ENCODE measurements at regions of chr11 and their contacts with region 1.

Region 1: GRCh38 chr11:86456052-86456939 is 81.6 kb downstream of the CCDC81 start:
- DNase-seq: peak; percentile 80
- ATAC-seq: peak; percentile 78
- H3K4me3 ChIP-seq: no peak overlapping the region
- H3K27ac ChIP-seq: no peak overlapping the region
- H3K4me1 ChIP-seq: peaks cover 22% of the 10 kb centered on the region
- H3K27me3 ChIP-seq: no peaks in the 10 kb centered on the region
- CTCF ChIP-seq: peak; percentile 96
- POLR2A ChIP-seq: peak; percentile 51; the same call in 1 of the 2 replicates
- RAD21 ChIP-seq: peak; percentile 99

Region 2: GRCh38 chr11:86515297-86516094 is 59.2 kb after region 1 on chr11:
- CTCF ChIA-PET with region 1: no interaction called
- POLR2A ChIA-PET with region 1: no interaction called
- dilution Hi-C with region 1: no loop called
- in situ Hi-C with region 1: no loop called
- intact Hi-C with region 1: loop called (anchors 5 kb)
- DNase-seq: peak; percentile 91
- ATAC-seq: peak; percentile 77
- H3K4me3 ChIP-seq: no peak overlapping the region
- H3K27ac ChIP-seq: no peak overlapping the region; the same call in 1 of the 2 replicates
- H3K4me1 ChIP-seq: peaks cover 24% of the 10 kb centered on the region
- H3K27me3 ChIP-seq: no peaks in the 10 kb centered on the region
- CTCF ChIP-seq: no peak
- POLR2A ChIP-seq: no peak
- RAD21 ChIP-seq: peak; percentile 5; the same call in 1 of the 2 replicates

Region 3: GRCh38 chr11:86671682-86672621 is 215.7 kb after region 1 on chr11 and contains the start of gene ME3:
- CTCF ChIA-PET with region 1: no interaction called
- POLR2A ChIA-PET with region 1: no interaction called
- dilution Hi-C with region 1: no loop called
- in situ Hi-C with region 1: no loop called
- intact Hi-C with region 1: loop called (anchors 2 kb)
- DNase-seq: peak; percentile 44
- ATAC-seq: peak; percentile 83
- H3K4me3 ChIP-seq: peak within 1 kb of the TSS; percentile 64
- H3K27ac ChIP-seq: peak within 1 kb of the TSS; percentile 18; the same call in 1 of the 2 replicates
- H3K4me1 ChIP-seq: 0 out of 2 replicates have a peak, but pooled peaks cover 2% of the 10 kb centered on the region
- H3K27me3 ChIP-seq: no peaks in the 10 kb centered on the region
- CTCF ChIP-seq: no peak
- POLR2A ChIP-seq: no peak
- RAD21 ChIP-seq: 0 out of 2 replicates have a peak, but pooled peaks have one; percentile 3
- total RNA-seq, gene ME3: 9.0 and 9.2 TPM in 2 replicates

Region 4: DNA sequence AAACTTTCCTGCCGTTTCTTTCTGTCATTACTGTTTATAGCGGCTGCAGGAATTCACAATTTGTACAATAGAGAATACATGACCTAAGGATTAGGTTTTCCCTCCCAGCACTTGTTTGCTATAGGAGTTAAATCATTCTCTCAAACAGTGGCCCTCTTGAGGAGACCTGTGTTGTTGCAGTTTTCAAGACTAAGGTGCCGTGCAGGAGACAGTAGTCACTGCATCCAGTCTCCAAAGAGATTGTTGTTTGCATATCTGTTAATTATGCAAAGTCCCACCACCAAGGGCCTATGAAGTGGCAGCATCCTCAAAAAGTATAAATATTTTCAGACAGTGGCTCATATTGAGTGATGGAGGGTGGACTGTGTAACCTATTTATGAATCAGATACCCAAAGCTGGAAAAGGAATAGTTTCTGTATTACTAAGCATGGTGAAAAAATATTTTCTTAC is 346.3 kb after region 1 on chr11:
- CTCF ChIA-PET with region 1: interaction called, 3 read pairs
- POLR2A ChIA-PET with region 1: no interaction called
- dilution Hi-C with region 1: no loop called
- in situ Hi-C with region 1: no loop called
- intact Hi-C with region 1: loop called (anchors 1 kb)
- DNase-seq: peak; percentile 57
- ATAC-seq: peak; percentile 15; the same call in 1 of the 2 replicates
- H3K4me3 ChIP-seq: peak overlapping the region; percentile 82; the same call in 1 of the 2 replicates
- H3K27ac ChIP-seq: no peak overlapping the region
- H3K4me1 ChIP-seq: peaks cover 22% of the 10 kb centered on the region
- H3K27me3 ChIP-seq: no peaks in the 10 kb centered on the region
- CTCF ChIP-seq: peak; percentile 45
- POLR2A ChIP-seq: no peak
- RAD21 ChIP-seq: peak; percentile 42

Region 5: GRCh38 chr11:86896441-86896841 is 440.1 kb after region 1 on chr11:
- CTCF ChIA-PET with region 1: no interaction called
- POLR2A ChIA-PET with region 1: no interaction called
- dilution Hi-C with region 1: no loop called
- in situ Hi-C with region 1: no loop called
- intact Hi-C with region 1: no loop called
- DNase-seq: peak; percentile 81
- ATAC-seq: peak; percentile 48
- H3K4me3 ChIP-seq: no peak overlapping the region
- H3K27ac ChIP-seq: no peak overlapping the region
- H3K4me1 ChIP-seq: no peaks in the 10 kb centered on the region
- H3K27me3 ChIP-seq: no peaks in the 10 kb centered on the region
- CTCF ChIP-seq: no peak
- POLR2A ChIP-seq: no peak
- RAD21 ChIP-seq: no peak

Region 6: DNA sequence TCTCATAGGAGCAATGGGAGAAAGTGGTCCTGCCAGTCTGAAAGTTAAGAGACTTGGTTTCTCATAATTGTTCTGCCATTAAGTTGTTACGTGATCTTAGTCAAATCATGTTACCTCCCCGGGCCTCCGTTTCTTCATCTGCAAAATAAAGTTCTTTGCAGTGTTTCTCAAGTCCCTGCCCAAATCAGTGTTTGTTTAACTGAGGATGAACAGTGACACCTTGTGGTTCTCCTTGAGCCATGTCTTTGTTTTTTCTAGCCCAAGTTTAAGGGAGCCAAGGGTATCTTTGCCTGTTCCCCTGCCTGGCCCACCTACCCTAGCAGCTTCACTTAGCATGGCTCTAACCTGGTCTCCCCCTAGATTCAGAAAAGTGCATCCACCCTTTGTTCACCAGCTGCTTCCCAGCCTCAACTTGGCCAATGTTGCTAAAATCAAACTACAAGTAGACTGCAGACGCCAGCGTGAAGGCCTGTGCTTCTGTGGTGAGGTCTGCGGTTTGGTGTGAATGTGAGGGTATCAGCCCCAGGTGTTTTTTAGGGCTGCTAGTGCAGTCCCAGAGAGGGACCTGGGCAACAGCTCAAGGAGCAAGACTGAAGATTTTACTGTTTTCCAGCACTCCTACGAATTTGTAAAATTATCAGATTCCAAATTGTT is 463.4 kb after region 1 on chr11:
- CTCF ChIA-PET with region 1: interaction called, 3 read pairs
- POLR2A ChIA-PET with region 1: no interaction called
- dilution Hi-C with region 1: no loop called
- in situ Hi-C with region 1: loop called (anchors 5 kb)
- intact Hi-C with region 1: loop called (anchors 1 kb)
- DNase-seq: peak; percentile 81
- ATAC-seq: peak; percentile 70
- H3K4me3 ChIP-seq: no peak overlapping the region
- H3K27ac ChIP-seq: no peak overlapping the region
- H3K4me1 ChIP-seq: peaks cover 8% of the 10 kb centered on the region
- H3K27me3 ChIP-seq: no peaks in the 10 kb centered on the region
- CTCF ChIP-seq: peak; percentile 82
- POLR2A ChIP-seq: no peak
- RAD21 ChIP-seq: peak; percentile 85